Left cardiac atrium (tissue), 4 donors: ENCODE measurements at regions of chr16 and their contacts with region 1.

Region 1: DNA sequence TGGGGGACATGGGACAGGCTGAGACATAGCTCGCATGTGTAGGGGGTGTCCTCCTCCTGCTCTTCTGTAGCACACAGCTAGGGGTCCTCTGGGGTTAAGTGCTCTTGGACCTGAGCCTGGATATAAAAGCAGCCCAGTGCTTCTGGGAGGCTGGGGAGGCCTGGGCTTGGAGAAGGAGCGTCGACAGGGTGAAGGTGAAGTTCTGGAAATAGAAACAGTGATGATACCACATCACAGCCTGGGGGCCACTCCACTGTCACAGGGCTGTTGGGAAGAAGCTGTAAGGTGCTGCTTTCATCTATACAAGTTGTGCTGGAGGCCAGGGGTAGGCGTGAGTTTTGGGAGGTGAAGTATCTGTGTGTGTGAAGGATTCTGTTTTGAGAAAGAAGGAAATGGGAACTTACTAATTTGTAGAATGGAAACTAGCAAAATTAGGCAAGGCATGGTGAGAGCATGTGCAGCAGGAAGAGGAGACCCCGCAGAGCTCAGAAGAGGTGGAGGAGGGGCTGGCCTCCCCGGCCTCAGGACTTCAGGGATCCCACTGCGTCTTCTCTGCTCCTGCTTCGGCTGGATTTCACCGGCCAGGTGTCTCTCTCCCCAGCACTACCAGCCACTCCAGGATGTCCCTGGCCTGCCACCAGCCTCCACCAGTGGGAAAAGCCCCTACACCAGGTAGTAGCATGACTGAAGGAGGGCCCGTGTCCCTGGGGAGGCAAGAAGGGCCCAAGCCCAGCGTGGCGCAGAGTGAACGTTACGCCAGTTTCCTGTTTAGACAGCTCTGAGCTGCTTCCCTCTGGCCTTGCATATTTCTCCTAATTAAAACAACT is 19.4 kb downstream of the PLCG2 start:
- DNase-seq: peak; percentile 51
- ATAC-seq: peak; percentile 90

Region 2: GRCh38 chr16:81231014-81231413 is 567.5 kb before region 1 on chr16:
- intact Hi-C with region 1: no loop called
- DNase-seq: no peak
- ATAC-seq: no peak

Region 3: GRCh38 chr16:81873843-81874752 is 75.6 kb after region 1 on chr16:
- intact Hi-C with region 1: loop called in 1 of 2 experiments (anchors 10 kb)
- DNase-seq: peak; percentile 48
- ATAC-seq: peak; percentile 70 to 79